ENCODE measurements at regions of chr2 and their contacts with region 1.

Region 1: DNA sequence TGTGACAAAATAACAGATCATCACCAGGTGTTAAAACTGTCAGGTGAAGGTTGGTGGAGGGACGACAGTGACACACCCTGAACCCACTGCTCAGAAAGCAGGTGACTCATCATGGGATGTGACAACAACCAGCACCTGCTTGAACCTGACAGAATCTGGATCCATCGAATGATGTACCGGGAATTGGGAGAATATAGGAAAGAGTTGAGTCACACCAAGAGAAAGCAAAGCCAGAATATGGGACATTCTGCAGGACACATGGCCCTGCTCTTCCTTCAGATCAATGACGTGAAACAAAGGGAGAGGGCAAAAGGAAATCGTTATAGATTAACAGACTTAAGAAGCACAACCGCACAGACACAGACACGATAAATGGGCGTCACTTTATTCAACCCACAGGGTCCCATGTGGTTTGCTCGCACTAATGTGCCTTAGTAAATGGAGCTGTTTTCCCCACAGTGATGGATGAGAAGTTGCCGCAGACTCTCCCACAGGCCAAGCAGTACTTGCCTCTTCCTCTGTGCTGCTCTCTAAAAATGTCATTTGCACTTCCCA is 100.1 kb downstream of the CRACDL start:
- DNase-seq: peak; percentile 50
- H3K4me3 Mint-ChIP-seq: peak overlapping the region; percentile 6
- H3K27ac Mint-ChIP-seq: peak overlapping the region; percentile 53
- H3K4me1 Mint-ChIP-seq: peaks cover 49% of the 10 kb centered on the region
- H3K27me3 Mint-ChIP-seq: peaks cover 7% of the 10 kb centered on the region

Region 2: DNA sequence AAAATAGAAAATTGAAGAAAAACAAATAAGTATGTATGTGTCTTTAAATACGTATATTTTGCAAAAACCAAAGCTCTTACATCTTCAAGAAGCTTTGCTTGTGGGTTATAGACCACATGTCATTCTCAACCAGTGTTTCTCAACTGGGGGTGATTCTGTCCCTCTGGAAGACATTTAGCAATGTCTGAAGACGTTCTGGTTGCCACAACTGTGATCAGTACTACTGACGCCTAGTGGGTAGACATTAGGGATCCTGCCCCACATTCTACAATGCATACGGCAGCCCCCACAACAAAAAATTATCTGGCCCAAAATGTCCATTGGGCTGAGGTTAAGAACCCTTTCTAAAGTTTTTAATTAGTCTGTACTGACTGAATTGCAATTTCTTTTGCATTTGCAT is 179.1 kb before region 1 on chr2:
- CTCF ChIA-PET with region 1: interaction called, 11 read pairs
- POLR2A ChIA-PET with region 1: interaction called, 5 read pairs
- DNase-seq: no peak
- H3K4me3 Mint-ChIP-seq: no peak overlapping the region
- H3K27ac Mint-ChIP-seq: peak overlapping the region; percentile 76
- H3K4me1 Mint-ChIP-seq: peaks cover 81% of the 10 kb centered on the region
- H3K27me3 Mint-ChIP-seq: no peaks in the 10 kb centered on the region

Region 3: DNA sequence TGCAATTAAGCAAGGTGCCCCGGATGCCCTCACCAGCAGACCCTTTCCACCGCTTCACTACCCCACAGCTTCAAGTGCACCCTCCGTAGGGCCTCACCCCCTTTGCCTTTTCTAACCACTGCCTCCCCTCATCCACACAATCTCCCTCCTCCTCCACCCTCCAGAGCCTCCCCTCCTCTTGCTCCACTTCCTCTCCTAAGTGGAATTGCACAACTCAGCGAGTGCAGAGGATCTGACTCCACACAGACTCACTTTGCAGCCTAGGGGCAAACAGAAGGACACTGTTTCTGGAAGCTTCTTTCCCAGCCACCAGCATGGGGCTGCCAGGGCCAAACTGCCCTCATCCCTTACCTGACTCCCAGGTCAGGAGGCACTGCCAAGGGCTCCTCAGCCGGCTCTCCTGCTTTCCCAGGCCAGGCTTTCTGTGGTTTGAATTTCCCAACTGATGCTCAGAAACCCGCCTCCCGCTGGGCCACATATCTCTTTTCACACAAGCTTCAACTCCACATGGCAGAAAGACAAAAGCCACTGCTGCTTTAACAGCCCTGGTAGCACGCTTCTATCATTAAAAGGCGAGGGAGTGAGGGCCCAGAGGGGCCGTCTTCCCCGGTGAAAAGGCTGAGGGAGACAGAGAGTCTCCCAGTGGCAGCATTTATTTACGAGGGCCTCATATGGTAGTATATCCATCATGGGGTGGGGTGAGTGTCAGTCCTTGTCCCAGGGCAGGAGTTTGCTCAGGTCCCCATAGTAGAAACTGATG is 30.3 kb before region 1 on chr2:
- CTCF ChIA-PET with region 1: no interaction called
- POLR2A ChIA-PET with region 1: no interaction called
- DNase-seq: no peak
- H3K4me3 Mint-ChIP-seq: no peak overlapping the region
- H3K27ac Mint-ChIP-seq: no peak overlapping the region
- H3K4me1 Mint-ChIP-seq: peaks cover 10% of the 10 kb centered on the region
- H3K27me3 Mint-ChIP-seq: peaks cover 6% of the 10 kb centered on the region

Region 4: GRCh38 chr2:98909317-98910211 is 73.7 kb after region 1 on chr2:
- CTCF ChIA-PET with region 1: no interaction called
- POLR2A ChIA-PET with region 1: no interaction called
- DNase-seq: no peak
- H3K4me3 Mint-ChIP-seq: no peak overlapping the region
- H3K27ac Mint-ChIP-seq: no peak overlapping the region
- H3K4me1 Mint-ChIP-seq: peaks cover 32% of the 10 kb centered on the region
- H3K27me3 Mint-ChIP-seq: peaks cover 41% of the 10 kb centered on the region

Region 5: GRCh38 chr2:99031481-99031880 is 195.6 kb after region 1 on chr2:
- CTCF ChIA-PET with region 1: no interaction called
- POLR2A ChIA-PET with region 1: no interaction called
- DNase-seq: no peak
- H3K4me3 Mint-ChIP-seq: no peak overlapping the region
- H3K27ac Mint-ChIP-seq: no peak overlapping the region
- H3K4me1 Mint-ChIP-seq: peaks cover 19% of the 10 kb centered on the region
- H3K27me3 Mint-ChIP-seq: peaks cover 3% of the 10 kb centered on the region